CD4-positive, alpha-beta memory T cell (primary cell): ENCODE measurements at regions of chr11 and their contacts with region 1.

Region 1: GRCh38 chr11:18408558-18409242 is 3.4 kb upstream of the LDHC start:
- DNase-seq: no peak
- H3K4me3 ChIP-seq: no peak overlapping the region
- H3K4me3 Mint-ChIP-seq: no peak overlapping the region
- H3K27ac ChIP-seq: no peak overlapping the region
- H3K27ac Mint-ChIP-seq: peak overlapping the region in 3 of 7 donors; percentile 15 to 74 (median 21)
- H3K4me1 ChIP-seq: peaks cover 8% of the 10 kb centered on the region
- H3K4me1 Mint-ChIP-seq: peaks cover 5 to 19% (median 11%) of the 10 kb centered on the region in 4 donors
- H3K27me3 ChIP-seq: no peaks in the 10 kb centered on the region
- H3K27me3 Mint-ChIP-seq: no peaks in the 10 kb centered on the region

Region 2: DNA sequence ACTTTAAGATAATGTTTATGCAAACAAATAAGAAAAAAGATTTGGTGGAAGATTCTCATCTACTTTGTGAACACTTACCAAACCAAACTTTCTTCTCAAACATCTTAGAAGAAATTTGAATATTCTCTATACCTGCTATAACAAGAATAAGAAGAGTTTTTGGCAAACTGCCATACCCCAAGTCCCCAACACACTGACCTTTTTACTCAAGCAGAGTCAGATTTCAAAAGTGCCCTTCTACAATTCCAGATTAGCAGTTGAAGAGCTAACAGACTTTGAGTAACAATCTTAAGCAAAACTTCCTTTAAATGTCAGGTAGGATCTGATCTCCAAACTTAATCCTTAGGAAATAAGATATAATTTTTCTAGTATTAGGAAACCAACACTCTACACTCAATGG is 84.2 kb after region 1 on chr11:
- CTCF ChIA-PET with region 1: no interaction called
- POLR2A ChIA-PET with region 1: no interaction called
- intact Hi-C with region 1: loop called (anchors 10 kb)
- DNase-seq: no peak
- H3K4me3 ChIP-seq: no peak overlapping the region
- H3K4me3 Mint-ChIP-seq: no peak overlapping the region
- H3K27ac ChIP-seq: no peak overlapping the region
- H3K27ac Mint-ChIP-seq: peak overlapping the region in 1 of 7 donors; percentile 50
- H3K4me1 ChIP-seq: no peaks in the 10 kb centered on the region
- H3K4me1 Mint-ChIP-seq: peaks cover 0 to 9% (median 3%) of the 10 kb centered on the region in 4 donors
- H3K27me3 ChIP-seq: no peaks in the 10 kb centered on the region
- H3K27me3 Mint-ChIP-seq: no peaks in the 10 kb centered on the region